Mammary epithelial cell (primary cell): ENCODE measurements at regions of chr4 and their contacts with region 1.

Region 1: GRCh38 chr4:52721968-52722815 is 29.0 kb downstream of the ERVMER34-1 start:
- DNase-seq: peak; percentile 95
- H3K4me3 ChIP-seq: peak overlapping the region; percentile 73 to 86 (median 74)
- H3K27ac ChIP-seq: peak overlapping the region; percentile 68
- H3K4me1 ChIP-seq: peaks cover 5% of the 10 kb centered on the region
- H3K27me3 ChIP-seq: no peaks in the 10 kb centered on the region
- CTCF ChIP-seq: no peak

Region 2: GRCh38 chr4:52824603-52825459 is 102.6 kb after region 1 on chr4:
- CTCF ChIA-PET with region 1: no interaction called
- dilution Hi-C with region 1: no loop called
- in situ Hi-C with region 1: no loop called
- intact Hi-C with region 1: loop called (anchors 5 kb)
- DNase-seq: no peak
- H3K4me3 ChIP-seq: no peak overlapping the region
- H3K27ac ChIP-seq: no peak overlapping the region
- H3K4me1 ChIP-seq: peaks cover 38% of the 10 kb centered on the region
- H3K27me3 ChIP-seq: no peaks in the 10 kb centered on the region
- CTCF ChIP-seq: no peak

Region 3: GRCh38 chr4:52861879-52862616 is 139.9 kb after region 1 on chr4 and contains the start of gene RASL11B:
- CTCF ChIA-PET with region 1: no interaction called
- dilution Hi-C with region 1: no loop called
- in situ Hi-C with region 1: no loop called
- intact Hi-C with region 1: loop called (anchors 5 kb)
- DNase-seq: peak; percentile 74
- H3K4me3 ChIP-seq: peak within 1 kb of the TSS; percentile 59 to 71 (median 62)
- H3K27ac ChIP-seq: no peak within 1 kb of the TSS
- H3K4me1 ChIP-seq: peaks cover 11% of the 10 kb centered on the region
- H3K27me3 ChIP-seq: no peaks in the 10 kb centered on the region
- CTCF ChIP-seq: no peak
- total RNA-seq, gene RASL11B: 2.4 to 3.5 TPM

Region 4: DNA sequence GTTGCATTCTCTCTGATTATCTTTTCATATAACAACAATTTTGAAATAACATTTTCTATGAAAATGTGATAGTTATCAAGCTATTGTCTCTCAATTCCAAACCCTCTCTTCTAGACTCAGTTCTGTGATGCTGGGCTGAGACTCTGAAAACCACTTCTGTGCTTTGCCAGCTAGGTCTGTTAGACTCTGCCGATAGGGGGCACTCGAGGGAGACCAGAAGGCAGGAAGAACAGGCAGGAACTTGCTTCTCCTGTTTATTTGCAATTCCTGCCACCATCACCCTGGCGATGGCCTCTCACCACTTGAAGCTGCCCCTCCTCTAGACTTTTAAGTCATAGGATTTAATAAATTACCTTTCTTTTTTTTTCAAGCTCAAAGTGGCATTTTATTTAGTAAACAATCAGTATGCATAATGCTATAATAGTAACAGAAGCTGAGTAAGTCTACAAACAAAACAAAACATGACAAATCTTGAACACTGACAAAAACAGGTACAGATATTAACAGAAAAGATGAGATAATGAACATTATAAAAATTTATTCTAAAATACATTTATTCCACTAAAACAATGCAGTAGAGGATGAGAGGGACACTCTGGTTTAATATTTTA is 189.6 kb after region 1 on chr4:
- CTCF ChIA-PET with region 1: no interaction called
- dilution Hi-C with region 1: no loop called
- in situ Hi-C with region 1: no loop called
- intact Hi-C with region 1: loop called (anchors 5 kb)
- DNase-seq: peak; percentile 73
- H3K4me3 ChIP-seq: no peak overlapping the region
- H3K27ac ChIP-seq: no peak overlapping the region
- H3K4me1 ChIP-seq: peaks cover 3% of the 10 kb centered on the region
- H3K27me3 ChIP-seq: no peaks in the 10 kb centered on the region
- CTCF ChIP-seq: peak; percentile 94 to 95

Region 5: GRCh38 chr4:52932591-52933470 is 210.6 kb after region 1 on chr4:
- CTCF ChIA-PET with region 1: no interaction called
- dilution Hi-C with region 1: no loop called
- in situ Hi-C with region 1: no loop called
- intact Hi-C with region 1: no loop called
- DNase-seq: no peak
- H3K4me3 ChIP-seq: no peak overlapping the region
- H3K27ac ChIP-seq: no peak overlapping the region
- H3K4me1 ChIP-seq: no peaks in the 10 kb centered on the region
- H3K27me3 ChIP-seq: no peaks in the 10 kb centered on the region
- CTCF ChIP-seq: no peak